ENCODE measurements at regions of chr1 and their contacts with region 1.

Region 1: DNA sequence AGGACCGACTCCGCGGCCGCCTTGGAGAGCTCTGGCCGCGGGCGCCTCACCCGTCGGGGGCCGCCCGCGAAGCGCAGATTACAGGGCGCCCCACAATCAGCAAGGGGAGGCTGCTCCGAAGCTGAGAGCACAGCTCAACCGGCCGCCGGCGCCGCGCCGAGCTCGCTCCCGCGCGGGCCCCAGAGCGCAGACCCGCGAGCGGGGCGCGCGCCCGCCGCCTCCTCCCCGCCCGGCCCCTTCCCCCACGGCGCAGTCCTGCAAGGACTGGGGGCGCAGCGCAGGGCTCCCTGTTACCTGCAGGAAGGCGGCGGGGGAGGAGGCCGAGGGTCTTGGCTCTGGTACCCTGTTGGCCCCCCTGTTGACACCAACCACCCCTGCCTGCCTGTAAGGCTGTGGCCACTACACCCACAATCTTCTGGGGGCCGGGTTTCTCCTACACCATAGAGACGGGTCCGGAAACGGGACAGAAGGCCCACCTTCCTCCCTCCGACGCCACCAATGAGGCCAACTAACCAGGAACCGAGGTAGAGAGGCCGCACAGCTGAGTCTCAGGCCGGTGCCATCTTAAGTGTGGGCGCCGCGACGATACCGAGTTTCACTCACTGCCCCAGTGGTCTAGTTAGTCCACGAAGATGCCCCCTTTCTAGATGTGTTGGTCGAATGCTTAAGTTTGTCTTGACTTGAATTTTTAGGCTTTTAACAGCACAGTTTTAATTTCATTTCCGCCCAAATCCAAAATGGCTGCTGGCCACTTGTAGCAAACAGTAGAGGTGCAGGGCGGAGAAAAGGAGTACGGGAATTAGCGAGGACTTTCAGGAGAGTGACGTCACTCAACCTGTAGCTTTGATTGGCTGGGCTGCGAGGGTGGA is at the start of gene SCYL3:
- DNase-seq: peak; percentile 89
- H3K4me3 Mint-ChIP-seq: peak within 1 kb of the TSS; percentile 86
- H3K27ac Mint-ChIP-seq: peak within 1 kb of the TSS; percentile 98
- H3K4me1 Mint-ChIP-seq: peaks cover 48% of the 10 kb centered on the region
- H3K27me3 Mint-ChIP-seq: peaks cover 8% of the 10 kb centered on the region
- total RNA-seq, gene SCYL3: 9.5 and 10.2 TPM in 2 replicates

Region 2: DNA sequence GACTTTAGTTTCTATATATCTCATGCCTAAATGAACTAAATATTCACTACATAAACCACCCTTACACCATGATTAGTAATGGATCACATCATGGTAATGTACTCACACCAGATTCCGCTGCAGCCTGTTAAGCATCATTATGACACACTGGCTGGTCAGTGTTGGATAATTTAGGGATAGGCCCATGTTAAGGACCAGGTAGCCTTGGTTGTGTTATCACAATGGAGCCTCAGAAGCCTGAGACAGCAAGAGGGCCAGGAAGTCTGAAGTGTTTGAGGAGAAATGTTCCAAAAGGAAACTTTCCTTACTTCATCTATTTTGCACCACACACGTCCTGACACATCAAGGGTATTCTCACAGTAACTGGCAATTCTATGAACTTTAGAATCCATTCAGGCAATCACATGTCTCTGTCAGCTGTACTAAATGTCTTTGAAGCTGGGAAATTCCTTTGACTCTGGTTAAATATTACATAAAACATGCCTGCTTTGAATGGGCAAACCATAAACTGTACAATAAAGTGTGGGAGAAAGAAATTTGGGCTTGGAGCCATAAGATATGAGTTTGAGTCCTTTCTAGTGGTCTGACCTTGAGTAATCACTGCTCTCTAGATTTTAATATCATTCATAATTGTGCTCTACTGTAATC is 1059.4 kb before region 1 on chr1:
- intact Hi-C with region 1: no loop called
- DNase-seq: no peak
- H3K4me3 Mint-ChIP-seq: no peak overlapping the region
- H3K27ac Mint-ChIP-seq: no peak overlapping the region
- H3K4me1 Mint-ChIP-seq: peaks cover 10% of the 10 kb centered on the region
- H3K27me3 Mint-ChIP-seq: peaks cover 9% of the 10 kb centered on the region

Region 3: DNA sequence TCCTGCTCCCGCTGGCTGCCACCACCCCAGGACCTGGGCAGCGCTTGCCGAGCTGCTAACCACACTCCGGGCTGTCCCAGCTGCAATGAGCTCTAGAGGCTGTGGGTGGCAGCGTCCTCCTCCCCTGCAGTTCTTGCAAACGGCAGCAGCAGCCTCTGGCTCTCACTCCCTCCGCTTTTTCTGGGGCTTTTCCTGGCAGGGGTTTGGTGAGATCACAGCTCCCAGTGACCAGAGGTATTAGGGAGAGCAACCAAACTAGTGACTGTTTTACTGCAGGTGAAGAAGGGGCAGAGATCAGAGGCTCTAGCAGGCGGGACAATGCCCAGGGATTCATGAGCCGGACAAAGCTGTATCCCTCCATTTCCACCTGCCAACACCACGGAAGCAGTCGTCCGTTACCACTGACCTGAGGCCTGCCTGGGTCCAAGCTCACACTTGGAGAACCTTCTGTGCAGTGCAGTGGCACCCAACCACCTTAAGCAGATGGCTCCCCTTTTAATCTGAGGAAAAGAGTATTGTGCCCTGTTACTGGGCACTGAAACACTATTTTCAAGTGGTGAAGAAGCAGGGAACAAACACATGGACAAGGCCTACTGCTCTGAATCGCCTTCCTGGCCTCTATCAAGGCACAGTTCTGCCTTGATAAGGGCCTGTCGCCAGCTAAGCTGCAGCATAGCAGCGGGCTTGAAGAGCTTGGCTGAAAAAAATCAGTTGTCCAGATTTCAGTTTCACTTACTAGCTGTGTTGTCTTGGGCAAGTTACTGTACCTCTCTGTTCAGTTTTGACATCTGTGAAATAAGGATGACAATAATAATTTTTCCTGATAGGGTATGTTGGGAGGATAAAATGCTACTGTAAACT is 307.1 kb before region 1 on chr1 and contains the start of gene F5:
- intact Hi-C with region 1: loop called (anchors 5 kb)
- DNase-seq: peak; percentile 69
- H3K4me3 Mint-ChIP-seq: peak within 1 kb of the TSS; percentile 89
- H3K27ac Mint-ChIP-seq: peak within 1 kb of the TSS; percentile 83
- H3K4me1 Mint-ChIP-seq: peaks cover 59% of the 10 kb centered on the region
- H3K27me3 Mint-ChIP-seq: no peaks in the 10 kb centered on the region
- total RNA-seq, gene F5: 25.0 and 26.0 TPM in 2 replicates

Region 4: DNA sequence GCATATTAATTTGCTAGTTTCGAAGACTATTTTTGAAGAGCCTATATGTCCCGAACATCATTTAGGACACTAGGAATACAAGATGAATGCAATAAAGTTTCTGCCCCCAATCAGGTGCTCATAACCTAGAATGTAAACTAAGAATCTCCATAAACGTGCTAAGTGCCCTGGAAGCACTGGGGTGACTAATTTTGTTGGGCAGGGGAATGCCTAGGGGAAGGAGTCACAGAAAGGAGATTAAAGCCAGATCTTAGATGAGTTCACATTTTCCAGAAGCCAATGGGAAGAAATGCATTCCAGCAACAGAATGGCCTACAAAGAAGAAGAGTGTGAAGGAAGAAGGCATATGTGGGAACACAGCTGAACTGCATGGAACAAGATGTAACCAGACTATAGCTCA is 19.5 kb before region 1 on chr1:
- intact Hi-C with region 1: no loop called
- DNase-seq: no peak
- H3K4me3 Mint-ChIP-seq: no peak overlapping the region
- H3K27ac Mint-ChIP-seq: no peak overlapping the region
- H3K4me1 Mint-ChIP-seq: peaks cover 24% of the 10 kb centered on the region
- H3K27me3 Mint-ChIP-seq: no peaks in the 10 kb centered on the region

Region 5: DNA sequence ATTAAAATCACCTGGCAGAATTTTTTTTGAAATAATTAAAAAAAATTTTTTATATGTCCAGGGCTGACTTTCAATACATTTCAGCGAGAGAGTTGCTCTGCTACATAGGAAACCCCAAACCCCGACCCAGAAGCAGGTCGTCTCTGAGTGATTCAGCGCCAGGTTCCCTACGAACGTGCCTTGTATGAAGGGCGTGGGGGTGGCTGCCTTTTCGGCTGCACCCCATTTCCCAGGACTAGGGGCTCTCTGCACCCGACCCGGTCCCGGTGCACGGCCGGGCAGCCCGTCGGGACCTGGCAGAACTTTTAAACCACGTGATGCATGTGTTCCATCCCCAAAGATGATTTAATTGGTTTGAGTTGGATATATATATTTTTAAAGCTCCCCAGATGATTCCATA is 15.8 kb after region 1 on chr1:
- intact Hi-C with region 1: loop called (anchors 2 kb)
- DNase-seq: no peak
- H3K4me3 Mint-ChIP-seq: no peak overlapping the region
- H3K27ac Mint-ChIP-seq: no peak overlapping the region
- H3K4me1 Mint-ChIP-seq: peaks cover 22% of the 10 kb centered on the region
- H3K27me3 Mint-ChIP-seq: no peaks in the 10 kb centered on the region

Region 6: GRCh38 chr1:169964206-169964605 is 70.5 kb after region 1 on chr1:
- intact Hi-C with region 1: no loop called
- DNase-seq: no peak
- H3K4me3 Mint-ChIP-seq: no peak overlapping the region
- H3K27ac Mint-ChIP-seq: no peak overlapping the region
- H3K4me1 Mint-ChIP-seq: no peaks in the 10 kb centered on the region
- H3K27me3 Mint-ChIP-seq: no peaks in the 10 kb centered on the region

Region 7: DNA sequence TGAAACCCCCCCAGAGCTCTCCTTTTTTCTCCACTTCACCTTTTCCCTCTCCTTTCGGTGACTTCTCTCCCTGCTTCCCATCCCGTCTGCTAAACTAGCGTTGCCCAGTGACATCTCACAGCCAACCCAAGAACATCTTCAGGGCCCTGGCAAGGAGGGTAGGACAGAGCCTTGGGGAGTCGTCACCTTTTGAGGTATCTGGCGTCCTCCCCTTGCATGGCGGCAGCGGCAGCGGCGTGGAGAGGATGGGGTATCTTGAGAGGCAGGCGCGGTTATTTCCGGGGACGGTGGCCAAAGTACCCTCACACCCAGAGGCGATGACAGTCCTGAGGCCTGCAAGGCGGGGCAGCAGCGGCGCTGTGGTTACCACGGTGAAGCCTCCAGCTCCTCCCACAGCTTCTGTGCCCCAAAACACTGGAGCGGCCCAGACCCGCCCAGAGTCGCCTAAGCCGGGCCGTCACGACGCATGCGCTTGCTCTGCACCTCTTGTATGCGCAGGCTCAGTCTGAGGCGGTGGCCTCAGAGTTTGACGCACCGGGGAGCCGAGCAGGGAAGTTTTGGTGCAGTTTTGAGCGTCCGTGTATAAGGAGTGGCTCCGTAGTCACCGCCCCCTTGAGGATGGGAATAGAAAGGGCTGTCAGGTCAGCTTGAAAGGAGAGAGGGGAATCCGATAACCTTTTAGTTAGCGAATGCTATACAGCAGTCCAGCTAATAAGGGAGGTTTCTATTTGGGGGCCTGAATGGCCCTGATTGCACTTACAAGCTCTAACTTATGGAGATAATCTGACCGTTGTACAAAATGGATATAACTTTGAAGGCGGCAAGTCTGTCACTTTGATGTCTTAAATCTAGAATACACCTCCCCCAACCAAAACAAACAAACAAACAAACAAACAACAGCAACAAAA is 180.8 kb after region 1 on chr1 and contains the start of gene KIFAP3:
- intact Hi-C with region 1: loop called (anchors 1 kb)
- DNase-seq: peak; percentile 96
- H3K4me3 Mint-ChIP-seq: peak within 1 kb of the TSS; percentile 96
- H3K27ac Mint-ChIP-seq: peak within 1 kb of the TSS; percentile 94
- H3K4me1 Mint-ChIP-seq: peaks cover 28% of the 10 kb centered on the region
- H3K27me3 Mint-ChIP-seq: no peaks in the 10 kb centered on the region
- total RNA-seq, gene KIFAP3: 15.1 and 15.5 TPM in 2 replicates

Measured in activated T-helper 2 cell treated with anti-CD3 and anti-CD28 coated beads, Interferon-gamma antibody, Interleukin-2, Interleukin-4, amounts not matched to agents 10 μg/mL and 5 μg/mL and 100 μg/mL, durations not matched to agents 14 hours and 24 hours and 36 hours (primary cell).